K562 (cell line): ENCODE measurements at regions of chr11 and their contacts with region 1.

Region 1: GRCh38 chr11:16280256-16280682 is 76.1 kb downstream of the SOX6 start:
- DNase-seq: peak; percentile 42 to 97 (median 54)
- ATAC-seq: peak; percentile 92
- H3K4me3 ChIP-seq: peak overlapping the region; percentile 9; the same call in 1 of the 2 replicates
- H3K27ac ChIP-seq: peak overlapping the region; percentile 84
- H3K4me1 ChIP-seq: peaks cover 0 to 19% of the 10 kb centered on the region in 2 experiments; a peak in 2 of 5 replicates
- H3K27me3 ChIP-seq: no peaks in the 10 kb centered on the region
- CTCF ChIP-seq: no peak
- EP300 ChIP-seq: peak; percentile 87
- POLR2A ChIP-seq: no peak
- RAD21 ChIP-seq: no peak

Region 2: GRCh38 chr11:15969281-15969680 is 311.0 kb before region 1 on chr11:
- CTCF ChIA-PET with region 1: no interaction called
- POLR2A ChIA-PET with region 1: no interaction called
- in situ Hi-C with region 1: no loop called
- intact Hi-C with region 1: loop called (anchors 10 kb)
- DNase-seq: peak; percentile 57 to 92 (median 72)
- ATAC-seq: peak; percentile 91
- H3K4me3 ChIP-seq: peak overlapping the region; percentile 1; the same call in 1 of the 2 replicates
- H3K27ac ChIP-seq: peak overlapping the region; percentile 93
- H3K4me1 ChIP-seq: peaks cover 18 to 39% of the 10 kb centered on the region in 2 experiments
- H3K27me3 ChIP-seq: no peaks in the 10 kb centered on the region
- CTCF ChIP-seq: no peak
- EP300 ChIP-seq: peak; percentile 61; the same call in 1 of the 2 replicates
- POLR2A ChIP-seq: peak; percentile 78
- RAD21 ChIP-seq: no peak

Region 3: DNA sequence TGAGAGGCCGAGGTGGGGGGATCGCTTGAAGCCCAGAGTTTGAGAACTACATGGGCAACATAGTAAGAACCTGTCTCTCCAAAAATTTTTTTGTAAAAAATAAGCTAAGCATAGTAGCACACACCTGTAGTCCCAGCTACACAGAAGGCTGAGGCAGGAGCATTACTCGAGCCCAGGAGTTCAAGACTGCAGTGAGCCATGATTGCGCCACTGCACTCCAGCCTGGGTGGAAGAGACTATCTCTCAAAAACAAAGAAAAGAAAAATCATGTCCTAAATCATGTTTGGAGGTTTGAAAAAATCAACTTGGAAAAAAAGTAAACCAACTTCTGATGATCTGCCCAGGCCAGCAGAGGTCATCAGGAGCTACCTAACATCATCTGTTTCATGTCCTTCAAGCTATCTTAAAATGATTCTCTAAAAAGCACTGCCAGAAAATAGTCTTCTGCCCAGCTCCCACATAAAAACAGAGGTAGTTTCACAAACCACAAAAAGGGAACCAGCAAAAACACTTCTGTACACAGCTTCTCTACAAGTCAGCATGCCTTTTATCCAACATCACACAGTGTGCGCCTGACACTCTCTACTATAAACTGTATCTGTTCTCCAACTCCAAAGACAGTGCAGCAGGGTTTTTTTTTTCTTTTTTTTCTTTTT is 88.9 kb before region 1 on chr11:
- CTCF ChIA-PET with region 1: no interaction called
- POLR2A ChIA-PET with region 1: no interaction called
- in situ Hi-C with region 1: no loop called
- intact Hi-C with region 1: loop called (anchors 5 kb)
- DNase-seq: peak in 2 of 4 experiments; percentile 35 to 54
- ATAC-seq: peak; percentile 75
- H3K4me3 ChIP-seq: no peak overlapping the region
- H3K27ac ChIP-seq: no peak overlapping the region
- H3K4me1 ChIP-seq: peaks cover 3 to 15% of the 10 kb centered on the region in 2 experiments; a peak in 4 of 5 replicates
- H3K27me3 ChIP-seq: no peaks in the 10 kb centered on the region
- CTCF ChIP-seq: peak in 2 of 3 experiments; percentile 53 to 67; a peak in 3 of 6 replicates
- EP300 ChIP-seq: no peak
- POLR2A ChIP-seq: no peak
- RAD21 ChIP-seq: peak; percentile 75 to 80

Region 4: DNA sequence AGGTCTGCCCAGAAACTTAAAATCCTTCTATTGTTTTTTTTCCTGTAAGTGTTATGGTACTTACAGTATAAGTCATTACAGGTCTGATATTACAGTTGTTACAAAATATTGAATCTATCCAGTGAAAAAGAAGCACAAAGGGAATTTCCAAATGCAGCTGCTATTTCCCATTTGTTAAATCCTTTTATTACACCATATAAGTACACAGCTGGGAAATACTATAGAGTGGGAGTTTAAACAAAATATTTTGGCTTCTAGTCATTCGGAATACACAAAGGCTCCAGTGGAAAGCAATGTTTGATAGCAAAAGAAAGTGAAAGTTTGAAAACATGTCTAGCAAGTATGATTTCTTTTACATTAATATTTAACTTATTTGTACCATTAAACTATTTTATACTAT is 58.1 kb after region 1 on chr11:
- CTCF ChIA-PET with region 1: no interaction called
- POLR2A ChIA-PET with region 1: no interaction called
- in situ Hi-C with region 1: no loop called
- intact Hi-C with region 1: loop called (anchors 2 kb)
- DNase-seq: no peak
- ATAC-seq: peak; percentile 42
- H3K4me3 ChIP-seq: no peak overlapping the region
- H3K27ac ChIP-seq: peak overlapping the region; percentile 89
- H3K4me1 ChIP-seq: peaks cover 0 to 28% of the 10 kb centered on the region in 2 experiments; a peak in 4 of 5 replicates
- H3K27me3 ChIP-seq: no peaks in the 10 kb centered on the region
- CTCF ChIP-seq: no peak
- EP300 ChIP-seq: no peak
- POLR2A ChIP-seq: no peak
- RAD21 ChIP-seq: no peak

Region 5: GRCh38 chr11:16356057-16356760 is 75.9 kb after region 1 on chr11 and contains the start of gene SOX6:
- CTCF ChIA-PET with region 1: no interaction called
- POLR2A ChIA-PET with region 1: no interaction called
- in situ Hi-C with region 1: no loop called
- intact Hi-C with region 1: loop called (anchors 5 kb)
- DNase-seq: peak in 2 of 4 experiments; percentile 29 to 70
- ATAC-seq: peak; percentile 76
- H3K4me3 ChIP-seq: no peak within 1 kb of the TSS
- H3K27ac ChIP-seq: peak within 1 kb of the TSS; percentile 53
- H3K4me1 ChIP-seq: peaks cover 4 to 55% of the 10 kb centered on the region in 2 experiments; a peak in 4 of 5 replicates
- H3K27me3 ChIP-seq: no peaks in the 10 kb centered on the region
- CTCF ChIP-seq: peak in 1 of 3 experiments; percentile 29; a peak in 3 of 6 replicates
- EP300 ChIP-seq: no peak
- POLR2A ChIP-seq: no peak
- RAD21 ChIP-seq: peak in 1 of 2 experiments; percentile 57; a peak in 3 of 4 replicates
- polyA plus RNA-seq, gene SOX6: 0.89 to 2.9 TPM